ENCODE measurements at regions of chr17 and their contacts with region 1.

Region 1: DNA sequence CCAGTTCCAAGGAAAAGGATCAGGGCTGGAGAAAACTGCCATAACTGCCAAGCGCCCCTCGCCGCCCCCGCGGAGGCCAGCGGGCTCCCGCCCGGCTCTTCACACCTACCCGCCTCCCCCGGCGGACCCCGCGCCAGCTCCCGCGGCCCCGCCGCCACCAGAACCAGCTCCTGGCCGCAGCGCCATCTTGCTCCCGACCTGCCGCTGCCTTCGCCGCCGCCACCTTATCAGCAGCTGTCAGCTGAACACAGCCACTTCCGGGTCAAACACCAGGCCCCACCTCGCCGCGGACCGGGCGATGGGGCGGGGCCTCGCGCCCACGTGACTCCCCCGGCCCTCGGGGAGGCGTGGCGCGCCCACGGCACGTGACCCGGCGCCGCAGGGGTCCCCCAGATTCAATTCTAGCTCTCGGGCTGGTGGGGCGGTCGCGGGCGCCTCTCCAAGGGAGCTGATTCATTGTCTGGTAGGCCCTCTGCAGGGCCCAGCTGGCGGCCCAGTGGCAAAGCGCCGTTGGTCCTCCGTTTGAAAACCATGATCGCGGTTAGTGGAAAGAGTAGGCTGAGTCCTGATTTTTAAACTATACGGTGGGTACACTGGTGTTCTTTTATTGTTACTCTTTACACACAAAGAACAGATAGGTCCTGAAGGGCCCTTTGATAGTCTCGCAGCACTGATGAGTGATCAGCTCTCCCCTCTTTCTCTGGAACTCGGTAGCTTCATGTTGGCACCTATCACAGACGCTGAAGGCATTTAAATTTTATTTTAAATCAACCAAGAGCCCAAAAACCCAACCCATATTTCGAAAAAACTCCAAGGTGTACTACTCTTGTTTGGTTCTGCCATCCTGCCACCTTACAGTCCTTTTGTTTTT is at the start of gene SYNRG:
- DNase-seq: peak; percentile 92 to 99 (median 96)
- ATAC-seq: peak; percentile 81
- H3K4me3 ChIP-seq: peak within 1 kb of the TSS; percentile 38 to 91
- H3K4me3 Mint-ChIP-seq: peak within 1 kb of the TSS; percentile 93
- H3K27ac ChIP-seq: peak within 1 kb of the TSS; percentile 75 to 88
- H3K27ac Mint-ChIP-seq: peak within 1 kb of the TSS; percentile 95
- H3K4me1 ChIP-seq: peaks cover 39% of the 10 kb centered on the region
- H3K4me1 Mint-ChIP-seq: peaks cover 35% of the 10 kb centered on the region
- H3K27me3 ChIP-seq: no peaks in the 10 kb centered on the region
- H3K27me3 Mint-ChIP-seq: no peaks in the 10 kb centered on the region
- CTCF ChIP-seq: peak; percentile 76
- total RNA-seq, gene SYNRG: 46.4 to 47.0 TPM

Region 2: GRCh38 chr17:36948717-36949460 is 660.5 kb before region 1 on chr17 and contains the start of gene AATF:
- CTCF ChIA-PET with region 1: no interaction called
- POLR2A ChIA-PET with region 1: no interaction called
- intact Hi-C with region 1: loop called (anchors 2 to 10 kb)
- DNase-seq: peak; percentile 82 to 99 (median 96)
- ATAC-seq: peak; percentile 91
- H3K4me3 ChIP-seq: peak within 1 kb of the TSS; percentile 81 to 91
- H3K4me3 Mint-ChIP-seq: peak within 1 kb of the TSS; percentile 98
- H3K27ac ChIP-seq: peak within 1 kb of the TSS; percentile 88 to 90
- H3K27ac Mint-ChIP-seq: peak within 1 kb of the TSS; percentile 98
- H3K4me1 ChIP-seq: peaks cover 26% of the 10 kb centered on the region
- H3K4me1 Mint-ChIP-seq: peaks cover 60% of the 10 kb centered on the region
- H3K27me3 ChIP-seq: peaks cover 28 to 34% of the 10 kb centered on the region in 2 experiments
- H3K27me3 Mint-ChIP-seq: peaks cover 31% of the 10 kb centered on the region
- CTCF ChIP-seq: no peak
- total RNA-seq, gene AATF: 49.5 to 51.5 TPM

Region 3: DNA sequence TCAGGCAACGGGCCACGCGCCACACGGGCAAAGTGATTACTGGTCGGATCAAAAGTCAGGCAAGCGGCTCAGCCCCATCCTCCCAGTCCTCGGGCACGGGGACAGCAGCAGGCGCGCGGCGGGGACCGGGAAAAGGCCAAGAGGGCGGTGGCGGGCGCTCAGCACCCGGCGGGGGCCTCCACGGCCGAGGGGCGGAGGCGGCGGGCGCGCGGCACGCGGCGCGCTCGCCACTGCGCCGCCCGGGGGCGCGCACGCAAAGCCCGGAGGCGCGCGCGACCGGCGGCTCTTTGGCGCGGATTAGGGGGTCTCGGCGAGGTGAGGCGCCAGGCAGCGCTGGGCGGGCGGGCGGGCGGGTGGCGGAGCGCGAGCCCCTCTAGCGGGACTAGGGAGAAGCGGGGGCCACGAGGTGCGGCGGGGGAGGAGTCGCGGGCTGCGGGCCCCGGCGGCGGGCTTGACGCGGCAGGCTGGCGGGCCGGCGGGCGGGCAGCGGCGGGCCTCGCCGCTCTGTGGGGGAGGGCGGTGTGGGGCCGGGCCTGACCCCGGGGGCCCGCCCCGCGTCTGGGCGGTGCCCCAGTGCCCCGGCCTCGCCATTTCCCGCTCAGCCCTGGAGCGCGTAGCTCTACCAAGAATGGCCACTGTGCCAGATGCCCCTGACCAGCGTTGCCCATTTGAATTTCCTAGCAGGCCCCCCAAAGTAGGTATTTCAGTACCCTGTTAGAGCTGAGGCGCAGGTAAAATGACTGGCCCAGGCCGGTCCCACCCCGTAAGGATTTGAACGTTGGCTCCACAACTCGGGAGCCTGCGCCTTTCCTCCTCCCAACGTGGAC is 202.6 kb before region 1 on chr17 and contains the starts of genes ACACA and TADA2A:
- CTCF ChIA-PET with region 1: no interaction called
- POLR2A ChIA-PET with region 1: interaction called, 4 read pairs
- intact Hi-C with region 1: loop called in 1 of 2 experiments (anchors 2 kb)
- DNase-seq: peak; percentile 40 to 88 (median 70)
- ATAC-seq: peak; percentile 91
- H3K4me3 ChIP-seq: peak within 1 kb of the TSS; percentile 87 to 90
- H3K4me3 Mint-ChIP-seq: peak within 1 kb of the TSS; percentile 95
- H3K27ac ChIP-seq: peak within 1 kb of the TSS; percentile 61 to 78
- H3K27ac Mint-ChIP-seq: peak within 1 kb of the TSS; percentile 93
- H3K4me1 ChIP-seq: peaks cover 14% of the 10 kb centered on the region
- H3K4me1 Mint-ChIP-seq: peaks cover 43% of the 10 kb centered on the region
- H3K27me3 ChIP-seq: no peaks in the 10 kb centered on the region
- H3K27me3 Mint-ChIP-seq: no peaks in the 10 kb centered on the region
- CTCF ChIP-seq: no peak
- total RNA-seq, gene ACACA: 30.7 to 34.2 TPM
- total RNA-seq, gene TADA2A: 5.3 to 11.1 TPM

Region 4: GRCh38 chr17:37527249-37527851 is 82.1 kb before region 1 on chr17:
- CTCF ChIA-PET with region 1: interaction called, 23 read pairs
- POLR2A ChIA-PET with region 1: interaction called, 4 read pairs
- intact Hi-C with region 1: loop called (anchors 1 kb)
- DNase-seq: peak in 3 of 9 experiments; percentile 13 to 69 (median 56)
- ATAC-seq: peak; percentile 77
- H3K4me3 ChIP-seq: no peak overlapping the region
- H3K4me3 Mint-ChIP-seq: no peak overlapping the region
- H3K27ac ChIP-seq: no peak overlapping the region
- H3K27ac Mint-ChIP-seq: peak overlapping the region; percentile 61
- H3K4me1 ChIP-seq: peaks cover 12% of the 10 kb centered on the region
- H3K4me1 Mint-ChIP-seq: peaks cover 18% of the 10 kb centered on the region
- H3K27me3 ChIP-seq: no peaks in the 10 kb centered on the region
- H3K27me3 Mint-ChIP-seq: no peaks in the 10 kb centered on the region
- CTCF ChIP-seq: peak; percentile 66

Region 5: GRCh38 chr17:37570527-37571093 is 38.8 kb before region 1 on chr17:
- CTCF ChIA-PET with region 1: interaction called, 6 read pairs
- POLR2A ChIA-PET with region 1: interaction called, 6 read pairs
- intact Hi-C with region 1: loop called in 1 of 2 experiments (anchors 5 kb)
- DNase-seq: peak in 6 of 9 experiments; percentile 3 to 44 (median 28)
- ATAC-seq: peak; percentile 54
- H3K4me3 ChIP-seq: no peak overlapping the region
- H3K4me3 Mint-ChIP-seq: no peak overlapping the region
- H3K27ac ChIP-seq: no peak overlapping the region
- H3K27ac Mint-ChIP-seq: no peak overlapping the region
- H3K4me1 ChIP-seq: no peaks in the 10 kb centered on the region
- H3K4me1 Mint-ChIP-seq: peaks cover 17% of the 10 kb centered on the region
- H3K27me3 ChIP-seq: no peaks in the 10 kb centered on the region
- H3K27me3 Mint-ChIP-seq: no peaks in the 10 kb centered on the region
- CTCF ChIP-seq: no peak

Region 6: DNA sequence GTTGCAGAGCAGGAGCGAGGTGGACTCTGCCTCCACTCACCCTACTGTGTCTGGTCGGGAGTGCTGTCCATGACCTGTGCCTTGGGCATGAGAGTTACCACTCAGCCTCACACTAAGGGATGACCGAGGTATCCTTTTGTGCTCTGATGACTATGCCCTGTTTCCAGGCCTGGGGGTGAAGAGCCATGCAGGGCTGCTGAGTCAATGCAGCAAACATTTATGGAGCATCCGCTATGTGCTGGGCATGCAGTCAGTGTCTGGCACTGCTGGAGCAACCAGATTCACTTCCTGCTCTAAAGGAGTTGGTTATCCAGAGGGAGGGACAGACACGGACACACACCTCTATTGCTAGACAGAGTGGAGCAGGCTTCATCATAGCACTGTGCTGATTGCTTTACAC is 143.1 kb after region 1 on chr17:
- CTCF ChIA-PET with region 1: no interaction called
- POLR2A ChIA-PET with region 1: no interaction called
- intact Hi-C with region 1: no loop called
- DNase-seq: no peak
- ATAC-seq: no peak
- H3K4me3 ChIP-seq: no peak overlapping the region
- H3K4me3 Mint-ChIP-seq: no peak overlapping the region
- H3K27ac ChIP-seq: no peak overlapping the region
- H3K27ac Mint-ChIP-seq: no peak overlapping the region
- H3K4me1 ChIP-seq: no peaks in the 10 kb centered on the region
- H3K4me1 Mint-ChIP-seq: no peaks in the 10 kb centered on the region
- H3K27me3 ChIP-seq: no peaks in the 10 kb centered on the region
- H3K27me3 Mint-ChIP-seq: peaks cover 19% of the 10 kb centered on the region
- CTCF ChIP-seq: no peak

Measured in CD8-positive, alpha-beta T cell (primary cell).